ENCODE measurements at regions of chr12 and their contacts with region 1.

Region 1: DNA sequence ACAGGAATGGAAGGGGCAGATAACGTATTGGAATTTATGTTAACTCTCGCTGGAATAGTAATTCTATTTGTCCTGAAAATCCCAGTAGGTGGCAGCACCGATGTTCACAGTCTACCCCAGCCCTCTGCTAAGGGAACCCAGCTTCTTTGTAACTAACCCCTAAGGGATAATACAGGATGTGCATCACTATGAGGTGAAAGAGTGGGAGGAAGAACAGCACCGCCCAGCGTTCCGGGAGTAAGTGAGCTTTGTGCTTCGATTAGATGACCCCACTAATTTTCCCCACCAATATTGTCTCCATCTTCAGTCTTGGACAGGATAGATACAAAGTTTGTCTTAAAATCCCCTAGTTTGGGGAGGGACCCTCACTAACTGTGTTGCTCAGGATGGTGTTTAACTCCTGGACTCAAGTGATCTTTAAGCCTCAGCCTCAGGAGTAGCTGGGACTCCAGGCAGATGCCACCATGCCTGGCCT is 2.7 kb downstream of the SLC2A3 start:
- DNase-seq: peak; percentile 60
- ATAC-seq: peak; percentile 80
- H3K4me3 Mint-ChIP-seq: no peak overlapping the region
- H3K27ac Mint-ChIP-seq: no peak overlapping the region
- H3K4me1 Mint-ChIP-seq: peaks cover 22% of the 10 kb centered on the region
- H3K27me3 Mint-ChIP-seq: no peaks in the 10 kb centered on the region

Region 2: DNA sequence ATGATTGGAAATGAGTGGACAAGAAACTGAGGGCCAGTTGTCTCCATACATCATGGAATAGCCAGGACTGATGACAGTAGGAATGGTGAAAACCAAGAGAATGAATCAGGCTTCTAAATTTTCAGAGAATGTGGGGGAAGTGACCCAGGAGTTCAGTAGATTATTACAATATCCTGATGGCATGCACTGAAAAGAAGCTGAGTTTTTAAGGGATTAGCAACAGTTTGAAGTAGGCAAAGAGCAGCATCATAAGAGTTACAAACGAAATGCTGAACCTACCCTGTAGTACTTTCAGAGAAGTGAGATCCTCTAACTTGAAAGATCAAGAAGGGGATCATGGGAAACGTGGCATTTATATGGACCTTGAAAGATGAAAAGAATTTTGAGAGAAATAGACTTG is 73.7 kb before region 1 on chr12:
- POLR2A ChIA-PET with region 1: interaction called, 12 read pairs
- DNase-seq: no peak
- ATAC-seq: no peak
- H3K4me3 Mint-ChIP-seq: no peak overlapping the region
- H3K27ac Mint-ChIP-seq: no peak overlapping the region
- H3K4me1 Mint-ChIP-seq: peaks cover 12% of the 10 kb centered on the region
- H3K27me3 Mint-ChIP-seq: peaks cover 9% of the 10 kb centered on the region

Region 3: DNA sequence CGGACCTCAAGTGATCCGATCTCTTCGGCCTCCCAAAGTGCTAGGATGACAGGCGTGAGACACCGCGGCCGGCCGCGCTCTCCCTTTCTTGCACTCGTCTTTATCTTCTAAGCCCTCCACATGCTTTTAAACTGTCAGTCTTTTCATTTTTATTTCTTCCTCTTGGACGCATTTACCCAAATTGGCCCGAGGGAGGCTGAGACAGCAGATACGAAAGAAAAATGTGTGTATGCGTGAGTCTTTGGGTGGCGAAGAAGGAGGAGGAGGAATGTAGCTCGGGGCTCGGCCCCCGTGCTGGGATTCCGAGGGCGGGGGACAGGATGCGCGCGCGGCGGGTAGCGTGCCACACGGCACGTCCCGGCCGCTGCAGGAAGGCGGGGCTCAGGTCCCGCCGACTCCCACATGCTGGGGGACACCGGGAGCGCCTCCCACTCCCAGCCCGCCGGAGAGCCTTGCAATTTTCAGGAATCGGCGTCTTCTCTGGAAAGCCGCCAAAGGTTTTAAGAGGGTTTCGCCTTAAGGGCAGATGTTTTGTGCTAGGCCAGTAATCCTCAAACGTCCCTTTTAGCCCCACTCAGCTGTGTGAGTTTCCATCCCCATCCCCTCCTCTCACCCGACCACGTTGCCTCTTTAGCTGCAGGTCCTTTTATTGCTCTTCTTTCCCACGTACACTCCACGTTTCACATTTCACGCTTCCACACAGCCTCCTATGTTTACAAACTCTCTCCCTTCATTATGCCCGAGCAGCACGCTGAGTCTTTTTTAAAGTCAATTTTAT is 37.4 kb after region 1 on chr12:
- POLR2A ChIA-PET with region 1: interaction called, 761 read pairs
- DNase-seq: peak; percentile 89
- ATAC-seq: peak; percentile 93
- H3K4me3 Mint-ChIP-seq: peak overlapping the region; percentile 79
- H3K27ac Mint-ChIP-seq: peak overlapping the region; percentile 93
- H3K4me1 Mint-ChIP-seq: peaks cover 30% of the 10 kb centered on the region
- H3K27me3 Mint-ChIP-seq: no peaks in the 10 kb centered on the region

Region 4: DNA sequence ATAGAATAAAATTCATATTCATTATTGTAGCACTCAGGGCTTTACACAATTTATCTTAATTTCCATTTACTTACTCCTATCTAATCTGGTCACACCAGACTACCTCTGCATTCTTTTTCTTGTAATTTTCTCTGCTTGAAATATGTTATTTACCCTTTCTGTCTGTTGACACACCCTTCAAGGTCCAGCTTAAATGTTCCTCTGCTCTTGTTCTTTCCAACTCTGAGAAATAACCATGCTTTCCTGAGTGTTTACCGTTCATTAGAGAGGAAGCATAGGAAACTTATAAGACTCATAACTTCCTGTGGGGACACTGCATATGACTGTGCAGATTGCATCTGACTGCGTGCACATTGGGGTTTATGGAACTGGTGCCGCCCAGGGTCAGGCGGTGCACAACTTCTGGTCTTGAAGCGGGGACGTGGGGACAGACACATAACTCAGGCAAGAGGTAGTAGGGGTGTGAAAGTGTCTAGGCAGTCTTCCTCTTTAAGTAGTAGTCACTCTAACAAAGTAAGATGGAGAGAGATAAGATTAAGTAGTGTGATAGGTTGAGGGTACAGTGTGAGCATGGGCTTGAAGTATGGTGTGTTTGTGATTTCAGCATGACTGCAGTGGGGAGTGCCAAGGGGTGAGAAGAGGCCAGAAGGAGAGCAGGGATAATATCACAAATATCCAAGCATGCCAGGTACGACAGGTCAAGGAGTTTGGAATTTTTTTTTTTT is 56.7 kb after region 1 on chr12:
- POLR2A ChIA-PET with region 1: interaction called, 82 read pairs
- DNase-seq: peak; percentile 64
- ATAC-seq: peak; percentile 96
- H3K4me3 Mint-ChIP-seq: peak overlapping the region; percentile 78
- H3K27ac Mint-ChIP-seq: peak overlapping the region; percentile 92
- H3K4me1 Mint-ChIP-seq: peaks cover 29% of the 10 kb centered on the region
- H3K27me3 Mint-ChIP-seq: no peaks in the 10 kb centered on the region

Region 5: DNA sequence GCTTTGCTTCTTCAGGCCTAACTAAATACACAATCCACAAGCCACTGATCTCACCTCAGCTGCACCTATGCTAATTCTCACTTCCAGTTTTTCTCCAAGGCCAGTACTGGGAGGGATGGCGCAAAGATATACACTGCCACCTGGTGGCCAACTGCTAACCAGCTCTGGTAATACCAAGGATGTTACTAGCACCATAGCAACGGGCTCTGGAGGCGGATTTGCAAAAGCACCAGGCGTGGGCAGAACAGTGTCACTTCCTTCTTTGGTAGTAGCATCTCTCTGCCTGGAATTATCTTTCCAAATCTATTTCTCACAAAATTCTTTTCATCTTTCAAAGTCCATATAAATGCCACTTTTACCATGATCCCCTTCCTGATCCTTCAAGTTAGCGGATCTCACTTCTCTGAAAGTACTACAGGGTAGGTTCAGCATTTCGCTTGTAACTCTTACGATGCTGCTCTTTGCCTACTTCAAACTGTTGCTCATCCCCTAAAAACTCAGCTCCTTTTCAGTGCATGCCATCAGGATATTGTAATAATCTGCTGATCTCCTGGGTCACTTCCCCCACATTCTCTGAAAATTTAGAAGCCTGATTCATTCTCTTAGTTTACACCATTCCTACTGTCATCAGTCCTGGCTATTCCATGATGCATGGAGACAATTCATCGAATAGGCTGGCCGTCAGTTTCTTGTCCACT is 62.1 kb after region 1 on chr12:
- POLR2A ChIA-PET with region 1: interaction called, 82 read pairs
- DNase-seq: peak; percentile 60
- ATAC-seq: peak; percentile 97
- H3K4me3 Mint-ChIP-seq: no peak overlapping the region
- H3K27ac Mint-ChIP-seq: no peak overlapping the region
- H3K4me1 Mint-ChIP-seq: peaks cover 14% of the 10 kb centered on the region
- H3K27me3 Mint-ChIP-seq: no peaks in the 10 kb centered on the region

Region 6: GRCh38 chr12:8032242-8033152 is 99.2 kb after region 1 on chr12 and contains the start of gene FOXJ2:
- POLR2A ChIA-PET with region 1: interaction called, 11 read pairs
- DNase-seq: peak; percentile 85
- ATAC-seq: peak; percentile 92
- H3K4me3 Mint-ChIP-seq: peak within 1 kb of the TSS; percentile 86
- H3K27ac Mint-ChIP-seq: peak within 1 kb of the TSS; percentile 83
- H3K4me1 Mint-ChIP-seq: peaks cover 37% of the 10 kb centered on the region
- H3K27me3 Mint-ChIP-seq: peaks cover 3% of the 10 kb centered on the region
- total RNA-seq, gene FOXJ2: 26.4 to 26.9 TPM